PC-9 (cell line): ENCODE measurements at regions of chr6 and their contacts with region 1.

Region 1: GRCh38 chr6:86615299-86615698 is 322.0 kb upstream of the HTR1E start:
- DNase-seq: no peak
- H3K4me3 ChIP-seq: no peak overlapping the region
- H3K27ac ChIP-seq: no peak overlapping the region
- H3K4me1 ChIP-seq: no peaks in the 10 kb centered on the region
- H3K27me3 ChIP-seq: no peaks in the 10 kb centered on the region
- CTCF ChIP-seq: no peak

Region 2: DNA sequence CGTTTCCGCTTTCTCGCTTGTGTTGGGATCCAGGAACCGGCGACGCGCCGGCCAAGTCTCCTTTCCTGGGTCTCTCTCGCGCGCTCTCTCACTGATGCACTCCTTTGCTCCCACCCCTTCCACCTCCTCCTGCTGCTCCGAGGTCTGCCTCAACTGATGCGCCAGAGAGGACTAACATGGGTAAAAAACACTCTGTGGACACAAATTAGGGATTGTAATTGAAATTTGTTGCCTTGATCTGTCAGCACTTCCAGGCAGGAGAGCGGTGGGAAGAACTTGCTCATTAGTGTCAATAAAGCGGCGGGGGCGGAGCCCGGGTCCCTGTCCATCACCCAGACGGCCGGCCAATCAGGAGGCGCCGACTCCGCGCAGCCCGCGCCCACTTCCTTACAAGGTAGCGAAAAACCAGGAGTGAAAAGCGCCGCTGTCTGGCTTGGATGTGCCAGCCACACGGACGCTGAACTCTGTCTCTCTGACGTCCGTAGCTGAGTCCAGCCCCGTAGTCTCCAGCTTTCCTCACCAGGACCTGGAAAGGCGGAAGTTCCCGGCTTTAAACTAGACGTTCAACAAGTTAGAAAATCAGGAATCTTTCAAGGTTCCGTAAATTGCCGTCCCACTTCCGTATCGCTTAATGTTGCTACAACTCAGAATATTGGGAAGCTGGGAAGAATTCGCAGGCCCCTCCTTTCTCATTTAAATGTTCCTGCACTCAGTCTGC is 1850.8 kb before region 1 on chr6 and contains the start of gene TBX18:
- CTCF ChIA-PET with region 1: no interaction called
- POLR2A ChIA-PET with region 1: interaction called, 22 read pairs
- intact Hi-C with region 1: no loop called
- DNase-seq: peak in 1 of 2 experiments; percentile 32
- H3K4me3 ChIP-seq: no peak within 1 kb of the TSS
- H3K27ac ChIP-seq: no peak within 1 kb of the TSS
- H3K4me1 ChIP-seq: no peaks in the 10 kb centered on the region
- H3K27me3 ChIP-seq: no peaks in the 10 kb centered on the region
- CTCF ChIP-seq: no peak
- total RNA-seq, gene TBX18: not detected in 2 replicates

Region 3: GRCh38 chr6:87001494-87001893 is 386.2 kb after region 1 on chr6:
- CTCF ChIA-PET with region 1: interaction called, 13 read pairs
- POLR2A ChIA-PET with region 1: no interaction called
- intact Hi-C with region 1: no loop called
- DNase-seq: no peak
- H3K4me3 ChIP-seq: no peak overlapping the region
- H3K27ac ChIP-seq: no peak overlapping the region
- H3K4me1 ChIP-seq: no peaks in the 10 kb centered on the region
- H3K27me3 ChIP-seq: no peaks in the 10 kb centered on the region
- CTCF ChIP-seq: no peak

Region 4: DNA sequence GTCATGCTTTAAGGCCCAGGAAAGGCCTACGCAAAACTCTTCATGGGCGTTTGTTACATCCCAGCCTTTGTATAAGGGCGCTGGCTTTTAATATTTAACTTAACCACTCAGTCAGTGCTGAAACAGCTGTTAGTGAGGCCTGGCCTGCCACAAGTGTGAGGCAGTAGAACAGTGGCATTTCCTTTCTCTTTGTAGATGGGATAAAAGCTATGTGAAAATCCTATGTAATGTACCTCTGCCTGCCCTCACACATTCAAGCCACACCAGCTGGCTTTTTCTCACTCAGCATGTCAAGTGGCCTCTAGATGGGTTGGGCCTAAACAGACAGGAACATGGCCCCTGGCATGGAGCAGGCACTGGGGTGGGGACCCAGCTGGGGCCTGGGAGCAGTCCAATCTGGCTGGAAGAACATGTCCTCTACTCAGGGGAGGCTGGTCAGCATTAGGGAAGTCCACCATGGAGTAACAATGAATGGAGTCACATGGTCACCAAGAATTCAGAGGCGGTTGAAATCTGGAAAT is 458.9 kb after region 1 on chr6:
- CTCF ChIA-PET with region 1: no interaction called
- POLR2A ChIA-PET with region 1: no interaction called
- intact Hi-C with region 1: no loop called
- DNase-seq: no peak
- H3K4me3 ChIP-seq: no peak overlapping the region
- H3K27ac ChIP-seq: no peak overlapping the region
- H3K4me1 ChIP-seq: no peaks in the 10 kb centered on the region
- H3K27me3 ChIP-seq: no peaks in the 10 kb centered on the region
- CTCF ChIP-seq: no peak